CD4-positive, alpha-beta T cell (primary cell): ENCODE measurements at regions of chr12 and their contacts with region 1.

Region 1: GRCh38 chr12:39365364-39366001 is 77.4 kb downstream of the KIF21A start:
- DNase-seq: peak in 1 of 14 experiments; percentile 20
- ATAC-seq: no peak
- H3K4me3 ChIP-seq: no peak overlapping the region
- H3K4me3 Mint-ChIP-seq: no peak overlapping the region
- H3K27ac ChIP-seq: no peak overlapping the region
- H3K27ac Mint-ChIP-seq: no peak overlapping the region
- H3K4me1 ChIP-seq: no peaks in the 10 kb centered on the region
- H3K4me1 Mint-ChIP-seq: no peaks in the 10 kb centered on the region
- H3K27me3 ChIP-seq: no peaks in the 10 kb centered on the region
- H3K27me3 Mint-ChIP-seq: no peaks in the 10 kb centered on the region
- CTCF ChIP-seq: no peak

Region 2: GRCh38 chr12:39692258-39692853 is 326.9 kb after region 1 on chr12:
- CTCF ChIA-PET with region 1: no interaction called
- POLR2A ChIA-PET with region 1: no interaction called
- intact Hi-C with region 1: loop called in 1 of 2 experiments (anchors 5 kb)
- DNase-seq: peak in 3 of 14 experiments; percentile 32 to 62 (median 33)
- ATAC-seq: peak; percentile 37
- H3K4me3 ChIP-seq: no peak overlapping the region
- H3K4me3 Mint-ChIP-seq: no peak overlapping the region
- H3K27ac ChIP-seq: no peak overlapping the region
- H3K27ac Mint-ChIP-seq: no peak overlapping the region
- H3K4me1 ChIP-seq: no peaks in the 10 kb centered on the region
- H3K4me1 Mint-ChIP-seq: peaks cover 4% of the 10 kb centered on the region
- H3K27me3 ChIP-seq: no peaks in the 10 kb centered on the region
- H3K27me3 Mint-ChIP-seq: peaks cover 11% of the 10 kb centered on the region
- CTCF ChIP-seq: peak; percentile 76